Heart right ventricle (tissue), 16 donors: ENCODE measurements at regions of chr3 and their contacts with region 1.

Region 1: GRCh38 chr3:98817547-98818041 is 54.5 kb downstream of the ST3GAL6 start:
- DNase-seq: no peak
- ATAC-seq: peak; percentile 55 to 87 (median 76)
- H3K4me3 ChIP-seq: no peak overlapping the region
- H3K27ac ChIP-seq: no peak overlapping the region
- H3K4me1 ChIP-seq: peaks cover 0 to 6% (median 0%) of the 10 kb centered on the region in 9 donors
- H3K27me3 ChIP-seq: no peaks in the 10 kb centered on the region
- CTCF ChIP-seq: peak; percentile 66 to 89 (median 82)

Region 2: DNA sequence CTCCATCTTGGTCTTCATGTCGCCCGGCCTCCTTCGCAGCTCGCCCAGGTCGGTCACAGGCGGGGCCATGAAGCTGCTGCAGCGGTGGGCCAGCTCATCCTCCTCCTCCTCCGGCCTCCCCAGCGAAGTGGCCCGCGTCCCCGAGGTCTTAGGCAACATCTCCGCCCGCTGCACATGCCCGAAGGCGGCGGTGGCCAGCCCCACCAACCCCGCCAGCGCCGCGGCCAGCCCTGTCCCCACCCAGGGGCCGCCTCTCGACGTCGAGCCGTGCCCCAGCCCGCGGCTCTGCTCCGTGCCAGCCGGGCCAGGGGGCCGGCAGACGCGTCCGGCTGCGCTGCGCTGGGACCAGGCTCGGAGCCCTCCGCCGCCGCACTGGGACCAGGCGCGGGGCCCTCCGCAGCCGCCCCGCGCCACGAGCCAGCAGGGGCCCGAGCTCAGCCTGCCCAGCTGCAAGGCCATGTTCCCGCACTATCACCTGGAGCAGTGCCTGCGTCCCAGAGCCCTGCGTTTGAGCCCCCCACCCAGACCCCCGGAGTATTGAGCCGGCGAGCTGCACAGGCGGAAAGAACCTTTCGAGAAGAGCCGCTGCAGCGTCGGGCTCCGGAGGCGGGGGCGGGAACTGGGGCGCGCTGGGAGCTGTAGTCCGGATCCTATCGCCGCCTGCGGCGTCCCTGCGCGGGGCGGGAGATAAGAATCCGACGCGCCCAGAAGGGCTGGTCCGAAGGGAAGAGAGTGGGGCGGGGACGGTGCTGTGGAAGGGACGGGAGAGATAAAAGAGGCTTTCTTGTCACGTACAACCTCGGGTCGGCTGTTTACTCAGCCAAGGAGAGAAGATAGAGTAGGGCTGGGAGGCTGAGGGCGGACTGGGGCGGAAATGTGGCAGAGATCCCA is 224.3 kb before region 1 on chr3 and contains the start of gene CPOX:
- intact Hi-C with region 1: loop called in 3 of 10 experiments (anchors 2 to 5 kb)
- DNase-seq: peak; percentile 89 to 91
- ATAC-seq: peak; percentile 97 to 99 (median 98)
- H3K4me3 ChIP-seq: peak within 1 kb of the TSS; percentile 65 to 86 (median 78)
- H3K27ac ChIP-seq: peak within 1 kb of the TSS; percentile 27 to 93 (median 82)
- H3K4me1 ChIP-seq: peaks cover 0 to 37% (median 23%) of the 10 kb centered on the region in 9 donors
- H3K27me3 ChIP-seq: no peaks in the 10 kb centered on the region
- CTCF ChIP-seq: peak in 1 of 9 donors; percentile 7
- total RNA-seq, gene CPOX: 7.7 to 12.5 (median 11.0) TPM

Region 3: GRCh38 chr3:98893740-98894139 is 76.1 kb after region 1 on chr3:
- intact Hi-C with region 1: loop called in 1 of 10 experiments (anchors 5 kb)
- DNase-seq: no peak
- ATAC-seq: peak in 6 of 8 donors; percentile 38 to 61 (median 53)
- H3K4me3 ChIP-seq: no peak overlapping the region
- H3K27ac ChIP-seq: peak overlapping the region in 4 of 10 donors; percentile 10 to 37 (median 28)
- H3K4me1 ChIP-seq: peaks cover 4 to 81% (median 60%) of the 10 kb centered on the region in 9 donors
- H3K27me3 ChIP-seq: no peaks in the 10 kb centered on the region
- CTCF ChIP-seq: no peak

Region 4: DNA sequence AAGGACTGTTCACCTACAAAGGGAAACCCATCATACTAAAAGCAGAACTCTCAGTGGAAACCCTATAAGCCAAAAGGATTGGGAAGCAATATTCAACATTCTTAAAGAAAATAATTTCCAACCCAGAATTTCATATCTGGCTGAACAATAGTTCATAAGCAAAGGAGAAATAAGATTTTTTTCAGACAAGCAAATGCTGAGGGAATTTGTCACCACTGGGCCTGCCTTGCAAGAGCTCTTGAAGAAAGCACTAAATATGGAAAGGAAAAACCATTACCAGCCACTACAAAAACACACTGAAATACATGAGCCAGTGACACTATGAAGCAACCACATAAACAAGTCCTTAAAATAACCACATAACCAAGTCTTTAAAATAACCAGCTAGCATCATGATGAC is 112.8 kb after region 1 on chr3:
- intact Hi-C with region 1: no loop called
- DNase-seq: no peak
- ATAC-seq: no peak
- H3K4me3 ChIP-seq: no peak overlapping the region
- H3K27ac ChIP-seq: no peak overlapping the region
- H3K4me1 ChIP-seq: no peaks in the 10 kb centered on the region
- H3K27me3 ChIP-seq: no peaks in the 10 kb centered on the region
- CTCF ChIP-seq: no peak

Region 5: DNA sequence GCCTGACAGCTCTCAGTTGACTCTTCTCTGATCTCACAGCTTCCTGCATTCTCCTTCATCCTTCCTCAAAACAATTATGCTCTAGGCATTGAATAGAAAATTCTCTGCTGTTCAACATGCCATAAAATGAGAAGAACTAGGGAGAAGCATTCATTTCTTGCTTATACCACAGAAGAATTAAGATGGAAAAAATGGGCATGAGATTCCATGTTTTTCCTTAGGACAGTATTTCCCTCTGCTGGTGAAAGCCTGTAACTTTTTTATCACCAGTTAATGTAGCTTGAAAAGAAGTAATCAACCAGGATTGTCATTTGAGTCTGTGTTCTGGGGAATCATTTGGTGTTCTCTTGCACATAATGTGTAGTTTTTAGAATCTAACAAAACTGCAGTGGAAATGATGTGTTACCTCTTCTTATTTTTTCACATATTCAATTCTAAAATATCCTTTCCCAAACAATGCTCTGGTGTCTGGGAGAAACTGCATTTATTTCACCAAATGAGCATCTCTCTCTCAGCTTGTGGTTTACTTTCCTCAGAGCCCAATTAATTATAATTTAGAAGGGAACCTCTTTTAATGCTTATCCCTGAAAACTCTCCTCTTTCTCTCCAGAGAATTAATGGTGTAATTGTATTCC is 176.7 kb after region 1 on chr3:
- intact Hi-C with region 1: loop called (anchors 1 to 5 kb)
- DNase-seq: no peak
- ATAC-seq: peak in 2 of 8 donors; percentile 42
- H3K4me3 ChIP-seq: no peak overlapping the region
- H3K27ac ChIP-seq: no peak overlapping the region
- H3K4me1 ChIP-seq: no peaks in the 10 kb centered on the region
- H3K27me3 ChIP-seq: no peaks in the 10 kb centered on the region
- CTCF ChIP-seq: peak; percentile 48 to 81 (median 70)

Region 6: DNA sequence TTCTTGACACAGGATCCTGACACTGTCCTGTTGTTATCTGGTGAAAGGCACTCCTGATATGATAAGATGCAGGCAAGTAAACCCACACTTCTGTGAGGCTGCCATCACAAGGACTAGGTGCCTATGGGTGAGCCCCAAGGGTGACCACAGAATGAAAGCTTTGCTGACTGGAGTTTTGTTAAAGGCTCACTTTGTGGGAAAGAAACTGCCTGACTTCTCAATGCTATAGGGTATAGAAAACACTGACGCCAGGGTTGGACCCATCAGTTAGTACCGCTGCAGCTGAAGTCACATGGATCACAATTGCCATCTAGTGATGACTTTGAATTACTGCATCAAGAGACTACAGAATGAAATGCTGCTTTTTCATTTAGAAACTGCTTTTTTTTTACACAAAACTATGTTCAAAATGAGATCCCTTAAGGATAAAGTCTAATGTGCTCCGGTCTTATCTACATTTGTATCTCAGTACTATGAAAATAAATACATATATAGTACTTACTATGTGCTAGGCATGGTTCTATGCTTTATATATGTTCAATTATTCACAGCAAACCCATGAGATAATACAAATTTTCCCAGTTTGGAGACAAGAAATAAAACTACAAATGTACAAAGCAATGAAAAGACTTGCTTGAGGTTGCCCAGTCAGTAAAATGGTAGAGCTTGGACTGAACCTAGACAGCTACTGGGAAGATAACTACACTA is 935.8 kb after region 1 on chr3:
- intact Hi-C with region 1: loop called in 3 of 10 experiments (anchors 5 to 10 kb)
- DNase-seq: no peak
- ATAC-seq: peak in 6 of 8 donors; percentile 55 to 83 (median 79)
- H3K4me3 ChIP-seq: no peak overlapping the region
- H3K27ac ChIP-seq: no peak overlapping the region
- H3K4me1 ChIP-seq: peaks cover 0 to 19% (median 4%) of the 10 kb centered on the region in 9 donors
- H3K27me3 ChIP-seq: no peaks in the 10 kb centered on the region
- CTCF ChIP-seq: peak; percentile 49 to 85 (median 71)